ENCODE measurements at regions of chr20 and their contacts with region 1.

Region 1: GRCh38 chr20:13302647-13303450 is 81.8 kb downstream of the ISM1 start:
- DNase-seq: peak; percentile 67
- H3K4me3 Mint-ChIP-seq: no peak overlapping the region
- H3K27ac Mint-ChIP-seq: no peak overlapping the region
- H3K4me1 Mint-ChIP-seq: no peaks in the 10 kb centered on the region
- H3K27me3 Mint-ChIP-seq: no peaks in the 10 kb centered on the region

Region 2: DNA sequence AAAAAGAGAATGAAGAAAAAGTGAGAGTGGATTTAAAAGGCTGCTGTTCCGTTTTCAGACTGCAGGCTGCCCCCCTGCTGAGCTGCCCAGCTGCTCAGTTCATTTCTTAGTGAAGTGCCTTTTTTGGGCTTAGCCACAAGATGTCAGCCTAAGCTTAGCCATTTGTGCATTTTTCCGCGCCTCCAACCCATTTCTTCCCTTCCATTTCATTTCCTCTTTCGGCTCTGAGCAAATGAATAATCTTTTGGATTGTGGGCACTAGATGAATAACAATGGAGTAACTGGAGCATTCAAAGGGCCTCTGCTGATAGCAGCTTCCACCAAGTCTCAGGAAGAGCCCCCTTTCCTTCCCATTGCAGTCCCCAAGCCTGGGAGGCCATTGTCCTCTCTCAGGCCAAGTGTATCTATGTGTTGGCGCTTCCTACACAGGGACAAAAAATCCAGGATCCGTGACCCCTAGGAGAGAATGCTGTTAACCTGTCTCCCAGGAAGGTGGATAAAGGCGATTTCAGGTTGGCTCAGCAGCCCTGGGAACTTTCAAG is 377.6 kb before region 1 on chr20:
- CTCF ChIA-PET with region 1: interaction called, 5 read pairs
- intact Hi-C with region 1: loop called (anchors 1 kb)
- DNase-seq: peak; percentile 48
- H3K4me3 Mint-ChIP-seq: no peak overlapping the region
- H3K27ac Mint-ChIP-seq: no peak overlapping the region
- H3K4me1 Mint-ChIP-seq: no peaks in the 10 kb centered on the region
- H3K27me3 Mint-ChIP-seq: peaks cover 10% of the 10 kb centered on the region